Ascending aorta (tissue), 2 donors: ENCODE measurements at regions of chr13 and their contacts with region 1.

Region 1: DNA sequence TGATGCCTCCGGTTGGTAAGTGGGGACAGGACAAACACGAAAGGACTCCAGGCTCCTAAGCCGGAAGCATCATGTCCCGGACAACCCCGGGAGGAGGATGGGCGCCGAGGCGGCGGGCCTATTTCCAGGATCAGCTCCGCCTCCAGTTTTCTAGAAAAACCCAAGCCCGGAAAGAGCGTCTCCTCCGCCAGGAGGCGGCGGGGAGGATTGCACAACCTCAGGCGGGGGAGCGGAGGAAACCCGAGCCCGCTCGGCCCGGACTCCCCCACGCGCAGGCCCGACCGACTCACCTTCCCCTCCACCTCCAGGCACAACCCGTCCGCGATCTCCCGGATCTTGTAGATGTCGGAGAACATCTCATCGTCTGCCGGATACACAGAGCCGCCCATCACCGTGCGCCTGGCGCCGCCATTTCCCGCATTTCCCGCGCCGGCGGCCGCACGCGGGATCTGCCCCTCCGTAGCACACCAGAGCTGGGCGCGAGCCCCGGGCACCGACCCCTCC is 509 bp downstream of the TPT1 start:
- DNase-seq: peak; percentile 69 to 96
- H3K4me3 ChIP-seq: peak overlapping the region; percentile 90 to 93
- H3K27ac ChIP-seq: peak overlapping the region; percentile 99 to 100
- H3K4me1 ChIP-seq: peaks cover 6 to 36% of the 10 kb centered on the region in 2 donors
- H3K27me3 ChIP-seq: no peaks in the 10 kb centered on the region
- CTCF ChIP-seq: peak; percentile 42 to 84 (median 46)

Region 2: GRCh38 chr13:44274452-44275205 is 1065.8 kb before region 1 on chr13:
- intact Hi-C with region 1: no loop called
- DNase-seq: no peak
- H3K4me3 ChIP-seq: peak overlapping the region; percentile 44 to 55
- H3K27ac ChIP-seq: peak overlapping the region; percentile 88 to 92
- H3K4me1 ChIP-seq: peaks cover 9 to 45% of the 10 kb centered on the region in 2 donors
- H3K27me3 ChIP-seq: no peaks in the 10 kb centered on the region
- CTCF ChIP-seq: no peak

Region 3: GRCh38 chr13:45310341-45311125 is 29.9 kb before region 1 on chr13:
- intact Hi-C with region 1: loop called (anchors 2 kb)
- DNase-seq: no peak
- H3K4me3 ChIP-seq: peak overlapping the region; percentile 27 to 79
- H3K27ac ChIP-seq: no peak overlapping the region
- H3K4me1 ChIP-seq: peaks cover 0 to 14% of the 10 kb centered on the region in 2 donors
- H3K27me3 ChIP-seq: no peaks in the 10 kb centered on the region
- CTCF ChIP-seq: no peak

Region 4: GRCh38 chr13:45325806-45326205 is 14.7 kb before region 1 on chr13:
- intact Hi-C with region 1: loop called (anchors 1 kb)
- DNase-seq: peak; percentile 39 to 88
- H3K4me3 ChIP-seq: no peak overlapping the region
- H3K27ac ChIP-seq: peak overlapping the region; percentile 68 to 91
- H3K4me1 ChIP-seq: peaks cover 15 to 40% of the 10 kb centered on the region in 2 donors
- H3K27me3 ChIP-seq: no peaks in the 10 kb centered on the region
- CTCF ChIP-seq: no peak

Region 5: DNA sequence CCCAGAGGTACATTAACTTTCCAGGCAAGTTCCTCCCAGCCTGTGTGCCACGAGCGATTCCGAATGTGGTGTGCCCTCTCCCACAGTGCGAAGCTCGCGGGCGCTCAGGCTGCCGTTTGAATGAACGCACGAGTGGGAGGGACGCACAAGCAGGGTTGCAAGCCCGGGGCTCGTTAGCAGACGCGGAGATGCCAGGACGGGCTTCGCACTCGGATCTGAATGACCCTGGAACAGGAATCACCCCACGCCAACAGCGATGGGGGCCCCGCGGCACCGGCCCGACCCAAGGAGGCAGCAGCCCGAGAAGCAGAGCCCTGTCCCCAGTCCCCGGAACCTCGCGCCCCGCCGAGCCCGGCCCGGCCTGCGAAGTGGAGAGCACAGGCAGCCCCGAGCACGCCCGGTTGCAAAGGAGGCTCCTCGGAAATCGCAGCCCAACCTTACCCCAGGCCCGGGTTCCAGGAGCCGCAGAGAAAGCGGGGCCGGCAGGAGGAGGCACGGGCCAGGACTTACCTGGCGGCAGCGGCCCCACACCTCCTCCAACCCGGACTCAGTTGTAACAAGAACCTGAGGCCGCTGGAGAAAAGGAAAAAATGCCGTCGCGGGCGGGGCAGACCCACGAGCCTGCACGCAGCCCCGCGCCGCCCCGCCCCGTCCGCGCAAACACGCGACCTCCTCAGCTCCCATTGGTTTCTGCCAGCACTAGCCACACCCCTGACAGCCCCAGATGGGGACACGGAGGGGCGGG is 77.5 kb after region 1 on chr13 and contains the start of gene SLC25A30:
- intact Hi-C with region 1: loop called (anchors 5 kb)
- DNase-seq: peak; percentile 87 to 97
- H3K4me3 ChIP-seq: peak within 1 kb of the TSS; percentile 70 to 80
- H3K27ac ChIP-seq: peak within 1 kb of the TSS; percentile 83 to 85
- H3K4me1 ChIP-seq: peaks cover 0 to 7% of the 10 kb centered on the region in 2 donors
- H3K27me3 ChIP-seq: no peaks in the 10 kb centered on the region
- CTCF ChIP-seq: no peak
- total RNA-seq, gene SLC25A30: 1.9 TPM

Region 6: GRCh38 chr13:45464687-45465453 is 124.4 kb after region 1 on chr13 and contains the start of gene COG3:
- intact Hi-C with region 1: loop called (anchors 10 kb)
- DNase-seq: peak; percentile 80 to 97
- H3K4me3 ChIP-seq: peak within 1 kb of the TSS; percentile 63 to 94
- H3K27ac ChIP-seq: peak within 1 kb of the TSS; percentile 90 to 93
- H3K4me1 ChIP-seq: peaks cover 3 to 18% of the 10 kb centered on the region in 2 donors
- H3K27me3 ChIP-seq: no peaks in the 10 kb centered on the region
- CTCF ChIP-seq: peak in 1 of 3 experiments; percentile 37
- total RNA-seq, gene COG3: 5.7 TPM